ENCODE measurements at regions of chr12 and their contacts with region 1.

Region 1: DNA sequence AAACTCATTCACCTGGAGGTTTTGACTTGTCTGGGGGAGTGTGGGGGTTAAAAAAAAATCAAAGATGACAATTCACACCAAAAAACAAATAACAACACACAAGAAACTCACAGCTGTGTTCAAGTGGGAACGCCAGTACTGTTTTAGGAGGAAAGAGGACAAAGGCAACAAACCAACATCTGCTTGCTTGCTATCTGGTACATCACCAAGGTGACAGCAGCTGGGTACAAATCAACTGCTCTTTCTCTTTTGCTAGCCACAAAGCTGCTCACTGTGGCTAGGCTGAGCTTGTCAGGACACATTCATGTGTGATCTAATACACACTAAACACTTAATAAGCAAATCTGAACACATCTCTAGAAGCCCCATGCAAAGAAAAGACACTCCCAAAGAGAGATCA is 128.0 kb upstream of the RAP1B start:
- DNase-seq: peak; percentile 28
- H3K4me3 Mint-ChIP-seq: no peak overlapping the region
- H3K27ac Mint-ChIP-seq: peak overlapping the region; percentile 42
- H3K4me1 Mint-ChIP-seq: peaks cover 37% of the 10 kb centered on the region
- H3K27me3 Mint-ChIP-seq: no peaks in the 10 kb centered on the region

Region 2: DNA sequence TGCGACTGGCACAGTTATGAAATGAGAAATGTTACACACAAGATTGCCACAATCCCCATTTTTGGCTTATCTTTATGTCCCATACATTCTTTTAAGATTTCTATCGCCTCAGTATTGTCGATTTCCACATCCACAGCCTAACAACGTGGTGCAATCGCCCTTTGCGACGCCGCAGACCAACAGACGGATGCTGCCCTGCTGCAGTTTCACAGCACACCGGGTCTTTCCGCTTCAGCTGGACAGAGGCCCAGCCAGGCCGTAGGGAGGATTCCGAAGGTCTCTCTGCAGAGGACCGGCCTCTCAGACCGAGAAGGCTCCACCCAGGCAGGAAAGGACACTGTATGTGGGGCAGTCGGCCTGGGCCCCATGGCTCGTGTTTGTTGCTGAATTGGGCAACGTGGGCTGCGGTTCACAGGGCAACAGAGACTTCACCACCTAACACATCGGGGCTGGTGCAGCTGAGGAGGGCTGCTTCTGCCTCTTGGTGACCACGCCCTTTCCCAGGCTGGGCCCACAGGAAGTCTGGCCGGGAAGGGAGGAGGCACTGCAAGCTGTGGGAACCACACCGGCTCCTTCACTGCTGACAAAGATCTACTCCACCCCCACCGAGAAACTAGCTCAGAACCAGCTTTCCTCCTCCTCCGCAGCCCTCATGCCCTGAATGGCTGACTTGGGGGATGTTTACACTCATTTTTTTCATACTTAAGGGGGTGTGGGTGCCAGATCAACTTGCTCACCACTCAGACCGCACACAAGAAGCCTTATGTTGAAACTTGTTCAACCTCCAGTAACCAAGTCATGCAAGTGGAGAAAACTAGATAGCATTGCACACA is 117.6 kb before region 1 on chr12:
- CTCF ChIA-PET with region 1: no interaction called
- intact Hi-C with region 1: loop called (anchors 1 kb)
- DNase-seq: peak; percentile 90
- H3K4me3 Mint-ChIP-seq: peak overlapping the region; percentile 79
- H3K27ac Mint-ChIP-seq: peak overlapping the region; percentile 90
- H3K4me1 Mint-ChIP-seq: peaks cover 57% of the 10 kb centered on the region
- H3K27me3 Mint-ChIP-seq: no peaks in the 10 kb centered on the region

Region 3: GRCh38 chr12:68374307-68374982 is 108.2 kb before region 1 on chr12:
- CTCF ChIA-PET with region 1: no interaction called
- intact Hi-C with region 1: loop called (anchors 1 kb)
- DNase-seq: peak; percentile 77
- H3K4me3 Mint-ChIP-seq: no peak overlapping the region
- H3K27ac Mint-ChIP-seq: peak overlapping the region; percentile 89
- H3K4me1 Mint-ChIP-seq: peaks cover 46% of the 10 kb centered on the region
- H3K27me3 Mint-ChIP-seq: peaks cover 3% of the 10 kb centered on the region

Region 4: DNA sequence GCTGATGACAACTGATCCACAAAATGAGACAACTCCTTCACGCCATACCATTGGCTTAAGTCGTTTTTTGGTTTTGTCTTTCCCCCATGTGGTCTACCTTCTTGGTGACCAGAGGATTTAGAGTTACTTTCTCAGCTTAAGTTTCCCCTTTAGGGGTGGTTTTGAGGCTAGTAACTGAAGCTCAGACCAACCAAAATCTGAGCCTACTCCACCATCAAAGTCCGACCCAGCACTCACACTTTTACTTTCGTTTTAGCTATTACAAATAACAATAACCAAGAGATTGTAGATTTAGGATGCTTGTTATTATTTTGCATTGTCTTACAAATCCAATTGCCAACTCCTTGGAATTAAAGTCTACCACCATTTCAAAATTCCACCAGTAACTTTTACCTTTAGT is 19.9 kb before region 1 on chr12:
- CTCF ChIA-PET with region 1: no interaction called
- intact Hi-C with region 1: loop called (anchors 2 kb)
- DNase-seq: no peak
- H3K4me3 Mint-ChIP-seq: peak overlapping the region; percentile 69
- H3K27ac Mint-ChIP-seq: peak overlapping the region; percentile 74
- H3K4me1 Mint-ChIP-seq: peaks cover 12% of the 10 kb centered on the region
- H3K27me3 Mint-ChIP-seq: no peaks in the 10 kb centered on the region

Region 5: DNA sequence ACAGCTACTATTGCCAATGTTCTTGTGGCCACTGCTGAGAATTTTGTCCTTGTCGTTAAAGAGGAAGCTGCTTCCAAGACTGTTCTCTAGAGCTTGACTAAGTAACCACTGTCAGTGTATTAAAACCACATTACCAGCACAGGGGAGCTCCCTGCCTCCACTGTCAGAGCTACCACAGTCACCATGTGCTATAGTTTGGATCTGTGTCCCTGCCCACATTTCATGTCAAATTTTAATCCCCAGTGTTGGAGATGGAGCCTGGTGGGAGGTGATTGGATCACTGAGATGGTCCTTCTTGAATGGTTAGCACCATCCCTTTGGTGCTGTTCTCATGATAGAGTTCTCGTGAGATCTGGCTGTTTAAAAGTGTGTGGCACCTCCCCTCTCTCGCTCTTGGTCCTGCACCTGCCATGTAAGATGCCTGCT is 104.8 kb after region 1 on chr12:
- CTCF ChIA-PET with region 1: no interaction called
- intact Hi-C with region 1: loop called (anchors 2 kb)
- DNase-seq: peak; percentile 81
- H3K4me3 Mint-ChIP-seq: no peak overlapping the region
- H3K27ac Mint-ChIP-seq: peak overlapping the region; percentile 27
- H3K4me1 Mint-ChIP-seq: peaks cover 55% of the 10 kb centered on the region
- H3K27me3 Mint-ChIP-seq: no peaks in the 10 kb centered on the region